ENCODE measurements at regions of chr12 and their contacts with region 1.

Region 1: DNA sequence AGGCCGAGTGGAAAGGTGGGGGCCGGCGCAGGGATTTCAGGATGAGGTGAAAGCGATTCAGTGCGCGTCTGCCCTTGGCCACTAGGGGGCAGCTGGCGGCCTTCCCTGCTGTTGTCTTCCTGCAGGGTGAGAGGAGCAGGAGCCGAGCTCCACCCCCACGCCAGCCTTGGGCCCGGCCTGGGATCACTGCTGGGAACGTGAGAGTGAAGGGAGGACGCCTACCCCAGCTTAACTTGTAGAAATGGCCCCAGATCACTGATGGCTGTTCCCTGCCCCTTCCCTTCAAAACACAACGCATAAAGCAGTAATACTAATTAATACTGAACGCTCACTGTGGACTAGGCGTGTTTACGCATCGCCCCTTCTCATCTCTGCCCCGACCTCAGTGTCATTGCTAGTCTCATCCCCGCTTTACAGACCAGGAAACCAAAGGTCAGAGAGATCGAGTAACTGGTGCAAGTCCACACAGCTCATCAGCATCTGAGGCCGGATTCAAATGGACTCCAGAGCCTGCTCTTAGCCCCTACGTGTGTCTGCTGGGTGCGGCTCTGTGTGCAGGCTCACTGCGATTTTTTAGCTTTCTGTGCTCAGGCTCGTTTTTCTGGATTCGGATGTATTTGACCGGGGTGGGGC is 24.3 kb downstream of the MVK start:
- DNase-seq: peak; percentile 44
- ATAC-seq: peak; percentile 98
- H3K4me3 ChIP-seq: no peak overlapping the region
- H3K27ac ChIP-seq: no peak overlapping the region
- H3K4me1 ChIP-seq: peaks cover 4 to 11% of the 10 kb centered on the region in 2 experiments
- H3K27me3 ChIP-seq: no peaks in the 10 kb centered on the region
- CTCF ChIP-seq: peak; percentile 87 to 98 (median 94)
- POLR2A ChIP-seq: no peak
- RAD21 ChIP-seq: peak; percentile 92

Region 2: GRCh38 chr12:107884769-107885694 is 1712.9 kb before region 1 on chr12:
- CTCF ChIA-PET with region 1: no interaction called
- POLR2A ChIA-PET with region 1: no interaction called
- RAD21 ChIA-PET with region 1: no interaction called
- intact Hi-C with region 1: no loop called
- DNase-seq: peak; percentile 41
- ATAC-seq: peak; percentile 96
- H3K4me3 ChIP-seq: no peak overlapping the region
- H3K27ac ChIP-seq: no peak overlapping the region
- H3K4me1 ChIP-seq: no peaks in the 10 kb centered on the region; a peak in 1 of 4 replicates
- H3K27me3 ChIP-seq: peaks cover 43% of the 10 kb centered on the region
- CTCF ChIP-seq: peak; percentile 79 to 86 (median 83)
- POLR2A ChIP-seq: no peak
- RAD21 ChIP-seq: peak; percentile 83

Region 3: GRCh38 chr12:109518820-109519665 is 78.9 kb before region 1 on chr12:
- CTCF ChIA-PET with region 1: no interaction called
- POLR2A ChIA-PET with region 1: no interaction called
- RAD21 ChIA-PET with region 1: no interaction called
- intact Hi-C with region 1: loop called (anchors 1 kb)
- DNase-seq: peak; percentile 26
- ATAC-seq: peak; percentile 91
- H3K4me3 ChIP-seq: no peak overlapping the region
- H3K27ac ChIP-seq: no peak overlapping the region
- H3K4me1 ChIP-seq: no peaks in the 10 kb centered on the region
- H3K27me3 ChIP-seq: no peaks in the 10 kb centered on the region
- CTCF ChIP-seq: peak; percentile 82 to 93 (median 92)
- POLR2A ChIP-seq: no peak
- RAD21 ChIP-seq: peak; percentile 85

Region 4: GRCh38 chr12:109557805-109558204 is 40.1 kb before region 1 on chr12:
- CTCF ChIA-PET with region 1: no interaction called
- POLR2A ChIA-PET with region 1: no interaction called
- RAD21 ChIA-PET with region 1: no interaction called
- intact Hi-C with region 1: no loop called
- DNase-seq: no peak
- ATAC-seq: no peak
- H3K4me3 ChIP-seq: no peak overlapping the region
- H3K27ac ChIP-seq: no peak overlapping the region
- H3K4me1 ChIP-seq: no peaks in the 10 kb centered on the region
- H3K27me3 ChIP-seq: 0 out of 2 replicates have a peak, but pooled peaks cover 6% of the 10 kb centered on the region
- CTCF ChIP-seq: no peak
- POLR2A ChIP-seq: no peak
- RAD21 ChIP-seq: no peak

Region 5: GRCh38 chr12:109573029-109573913 is 24.6 kb before region 1 on chr12 and contains the starts of genes MMAB and MVK:
- CTCF ChIA-PET with region 1: interaction called, 11 read pairs
- POLR2A ChIA-PET with region 1: interaction called, 3 read pairs
- RAD21 ChIA-PET with region 1: no interaction called
- intact Hi-C with region 1: no loop called
- DNase-seq: peak; percentile 99
- ATAC-seq: peak; percentile 93
- H3K4me3 ChIP-seq: peak within 1 kb of the TSS; percentile 71 to 90
- H3K27ac ChIP-seq: peak within 1 kb of the TSS; percentile 77
- H3K4me1 ChIP-seq: peaks cover 4 to 17% of the 10 kb centered on the region in 2 experiments; a peak in 3 of 4 replicates
- H3K27me3 ChIP-seq: no peaks in the 10 kb centered on the region
- CTCF ChIP-seq: no peak
- POLR2A ChIP-seq: peak; percentile 29
- RAD21 ChIP-seq: no peak
- total RNA-seq, gene MMAB: 34.9 TPM
- total RNA-seq, gene MVK: 17.3 TPM

Region 6: DNA sequence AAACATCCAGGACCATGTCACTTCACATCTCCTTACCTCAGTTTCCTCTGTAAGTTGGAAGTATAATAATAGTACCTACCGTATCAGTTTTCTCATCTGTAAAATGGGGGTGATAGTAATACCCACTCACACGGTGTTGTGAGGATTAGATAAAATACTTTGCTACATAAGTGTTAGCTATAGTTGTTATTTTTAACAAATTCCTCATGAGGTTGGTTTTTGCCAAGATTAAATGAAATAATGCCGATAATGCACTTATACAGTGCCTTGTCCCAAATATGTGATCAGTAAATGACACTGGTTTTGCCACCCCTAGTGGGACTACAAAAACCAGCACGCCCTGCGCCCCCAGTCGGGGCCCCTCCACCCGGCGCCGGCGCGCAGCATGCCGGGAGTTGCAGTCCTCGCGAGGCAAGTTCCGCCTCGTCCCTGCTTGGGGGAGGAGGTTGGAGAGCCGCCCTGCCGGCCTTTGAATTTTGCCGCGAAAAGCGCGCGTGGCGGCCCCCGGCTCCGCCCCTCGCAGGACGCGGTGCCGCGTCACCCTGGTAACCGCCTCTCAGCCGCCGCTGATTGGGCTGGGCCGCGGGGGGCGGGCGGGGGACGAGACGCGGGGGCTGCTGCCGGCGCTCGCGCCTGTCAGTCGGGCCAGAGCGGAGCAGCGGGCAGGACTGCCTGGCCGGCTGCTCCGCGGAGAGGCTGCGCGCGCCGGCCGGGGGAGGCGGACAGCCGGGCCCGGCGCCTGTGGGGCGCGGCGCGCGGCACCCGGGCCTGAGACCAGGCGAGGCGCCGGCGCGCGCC is 115.5 kb after region 1 on chr12 and contains the start of gene FAM222A:
- CTCF ChIA-PET with region 1: interaction called, 15 read pairs
- POLR2A ChIA-PET with region 1: no interaction called
- RAD21 ChIA-PET with region 1: interaction called in 1 of 2 experiments, 4 read pairs
- intact Hi-C with region 1: no loop called
- DNase-seq: peak; percentile 93
- ATAC-seq: peak; percentile 91
- H3K4me3 ChIP-seq: peak within 1 kb of the TSS; percentile 48 to 66
- H3K27ac ChIP-seq: peak within 1 kb of the TSS; percentile 45; the same call in 1 of the 2 replicates
- H3K4me1 ChIP-seq: peaks cover 6 to 15% of the 10 kb centered on the region in 2 experiments; a peak in 3 of 4 replicates
- H3K27me3 ChIP-seq: no peaks in the 10 kb centered on the region
- CTCF ChIP-seq: no peak
- POLR2A ChIP-seq: peak; percentile 60
- RAD21 ChIP-seq: no peak
- total RNA-seq, gene FAM222A: 3.7 TPM

Region 7: GRCh38 chr12:109775172-109775881 is 177.4 kb after region 1 on chr12:
- CTCF ChIA-PET with region 1: interaction called, 64 read pairs
- POLR2A ChIA-PET with region 1: no interaction called
- RAD21 ChIA-PET with region 1: interaction called, 9 read pairs
- intact Hi-C with region 1: loop called (anchors 1 kb)
- DNase-seq: no peak
- ATAC-seq: peak; percentile 67
- H3K4me3 ChIP-seq: no peak overlapping the region
- H3K27ac ChIP-seq: no peak overlapping the region
- H3K4me1 ChIP-seq: peaks cover 13 to 34% of the 10 kb centered on the region in 2 experiments
- H3K27me3 ChIP-seq: no peaks in the 10 kb centered on the region
- CTCF ChIP-seq: peak; percentile 91 to 96 (median 94)
- POLR2A ChIP-seq: no peak
- RAD21 ChIP-seq: peak; percentile 98